Endothelial cell of umbilical vein (primary cell): ENCODE measurements at regions of chr1 and their contacts with region 1.

Region 1: DNA sequence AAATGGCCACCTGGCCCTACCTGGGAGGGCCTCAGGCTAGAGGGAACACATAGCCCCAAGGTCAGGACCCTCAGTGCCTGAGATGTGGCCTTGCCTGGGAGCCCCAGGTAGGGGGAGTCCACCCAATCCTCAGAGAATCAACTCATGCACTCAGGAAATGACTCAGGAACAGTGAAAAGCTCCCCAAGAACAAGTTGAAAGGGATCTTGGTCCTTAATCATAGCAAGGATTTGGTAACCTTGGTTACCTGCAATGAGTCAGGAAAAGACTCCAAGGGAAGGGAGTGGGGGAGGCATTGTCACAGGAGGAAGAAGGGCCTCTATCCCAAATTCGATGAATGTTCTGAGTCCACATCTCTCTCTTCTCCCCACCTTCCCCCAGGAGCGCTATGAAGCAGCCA is 17.0 kb downstream of the MAP7D1 start:
- DNase-seq: peak; percentile 49
- H3K4me3 ChIP-seq: no peak overlapping the region
- H3K27ac ChIP-seq: peak overlapping the region; percentile 56
- H3K4me1 ChIP-seq: peaks cover 19% of the 10 kb centered on the region
- H3K27me3 ChIP-seq: no peaks in the 10 kb centered on the region
- CTCF ChIP-seq: no peak
- POLR2A ChIP-seq: no peak

Region 2: DNA sequence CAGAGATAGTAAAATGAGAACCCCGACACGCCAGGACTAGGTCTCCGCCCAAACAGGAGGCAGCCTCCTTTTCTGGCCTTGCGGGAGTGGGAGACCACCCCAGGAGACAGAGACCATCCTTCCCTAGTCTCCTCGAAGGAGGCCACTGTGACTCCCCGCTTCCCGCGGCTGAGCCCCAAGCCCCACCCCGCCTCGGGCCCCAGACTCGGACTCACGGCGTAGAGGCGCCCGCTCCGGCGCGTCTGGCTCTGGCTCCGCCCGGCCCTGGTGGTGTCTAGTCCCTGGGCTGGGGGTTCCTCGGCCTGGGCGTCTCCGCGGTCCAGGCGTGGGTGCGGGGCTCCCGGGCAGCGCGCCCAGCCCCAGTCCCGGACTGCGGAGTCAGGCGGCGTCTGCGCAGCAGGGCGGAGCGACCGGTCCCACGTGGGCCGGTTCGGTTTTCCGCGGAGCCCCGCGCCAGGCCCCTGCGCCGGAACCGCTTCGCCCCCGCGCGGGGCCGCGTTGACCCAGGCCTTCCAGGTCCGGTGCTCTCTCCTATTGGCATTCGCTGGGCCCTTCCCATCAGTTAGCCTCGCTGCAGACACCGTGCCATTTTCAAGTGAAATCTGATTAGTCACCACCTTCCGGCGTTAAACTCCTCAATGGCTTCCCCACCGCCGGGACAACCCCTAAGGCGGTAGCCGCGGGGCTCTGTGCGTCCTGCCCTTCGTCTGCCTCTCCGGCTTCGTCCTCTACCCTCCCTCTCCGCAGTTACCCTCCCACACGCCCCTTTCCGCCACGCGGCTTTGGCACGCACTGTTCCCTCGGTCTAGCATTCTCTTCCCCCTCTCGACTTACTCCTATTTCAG is 454.3 kb before region 1 on chr1 and contains the start of gene C1orf216:
- CTCF ChIA-PET with region 1: no interaction called
- POLR2A ChIA-PET with region 1: no interaction called
- dilution Hi-C with region 1: no loop called
- intact Hi-C with region 1: no loop called
- DNase-seq: peak; percentile 77
- H3K4me3 ChIP-seq: peak within 1 kb of the TSS; percentile 65 to 84 (median 77)
- H3K27ac ChIP-seq: peak within 1 kb of the TSS; percentile 42
- H3K4me1 ChIP-seq: peaks cover 13% of the 10 kb centered on the region
- H3K27me3 ChIP-seq: no peaks in the 10 kb centered on the region
- CTCF ChIP-seq: no peak
- POLR2A ChIP-seq: peak; percentile 86
- total RNA-seq, gene C1orf216: 15.3 and 18.5 TPM in 2 replicates

Region 3: DNA sequence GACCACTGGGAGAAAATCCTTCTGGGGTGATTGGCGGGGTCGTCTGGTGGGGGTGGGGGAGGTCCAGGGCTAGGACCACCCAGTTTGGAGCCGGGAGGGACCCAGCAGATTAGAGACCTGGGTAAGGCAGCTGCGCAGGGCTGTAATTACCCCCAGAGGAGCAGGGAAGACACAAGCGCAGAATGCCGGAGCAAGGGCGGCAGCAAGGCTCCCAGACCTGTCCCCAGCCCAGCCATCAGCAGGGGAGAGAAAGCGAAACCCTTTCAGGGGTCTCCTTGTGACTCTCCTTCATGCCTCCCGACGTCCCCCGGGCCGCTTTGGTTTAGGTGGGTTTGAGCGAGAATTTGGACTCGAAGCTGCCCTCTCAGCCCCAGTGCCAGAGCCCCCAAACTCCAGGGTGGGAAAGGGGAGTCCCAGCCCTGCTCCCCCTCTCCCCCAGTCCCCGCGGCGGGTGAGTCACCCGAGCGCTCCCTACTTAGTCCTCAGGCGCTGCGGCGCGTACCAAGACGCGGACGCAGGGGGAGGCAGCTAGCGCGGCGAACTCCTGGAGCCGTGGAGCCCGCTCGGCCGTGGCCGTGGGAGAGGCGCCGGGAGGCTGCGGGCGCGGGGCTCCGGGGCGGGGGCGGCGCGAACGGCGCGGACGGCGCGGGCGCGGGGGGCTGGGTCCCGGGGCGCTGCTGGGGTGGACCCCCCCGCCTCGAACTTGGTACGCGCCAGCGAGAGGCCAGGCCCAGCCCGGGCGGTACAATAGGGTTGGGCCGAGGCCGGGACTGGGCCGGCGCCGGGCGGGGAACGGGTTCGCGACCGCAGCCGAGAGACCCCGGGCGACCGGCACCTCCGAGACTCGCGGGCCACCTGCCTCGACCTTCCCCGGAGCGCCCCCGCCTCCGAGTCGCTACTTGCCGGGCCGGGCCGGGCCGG is 17.3 kb before region 1 on chr1 and contains the start of gene MAP7D1:
- CTCF ChIA-PET with region 1: interaction called, 23 read pairs
- POLR2A ChIA-PET with region 1: interaction called, 10 read pairs
- dilution Hi-C with region 1: no loop called
- intact Hi-C with region 1: loop called (anchors 2 kb)
- DNase-seq: peak; percentile 76
- H3K4me3 ChIP-seq: peak within 1 kb of the TSS; percentile 48 to 88 (median 80)
- H3K27ac ChIP-seq: peak within 1 kb of the TSS; percentile 93
- H3K4me1 ChIP-seq: peaks cover 50% of the 10 kb centered on the region
- H3K27me3 ChIP-seq: no peaks in the 10 kb centered on the region
- CTCF ChIP-seq: no peak
- POLR2A ChIP-seq: peak; percentile 88
- total RNA-seq, gene MAP7D1: 193 and 199 TPM in 2 replicates

Region 4: GRCh38 chr1:36160949-36161485 is 12.0 kb before region 1 on chr1:
- CTCF ChIA-PET with region 1: interaction called, 15 read pairs
- POLR2A ChIA-PET with region 1: interaction called, 10 read pairs
- dilution Hi-C with region 1: no loop called
- intact Hi-C with region 1: loop called (anchors 1 kb)
- DNase-seq: peak; percentile 83
- H3K4me3 ChIP-seq: peak overlapping the region; percentile 26 to 66 (median 36)
- H3K27ac ChIP-seq: peak overlapping the region; percentile 97
- H3K4me1 ChIP-seq: peaks cover 51% of the 10 kb centered on the region
- H3K27me3 ChIP-seq: no peaks in the 10 kb centered on the region
- CTCF ChIP-seq: peak; percentile 29 to 36
- POLR2A ChIP-seq: peak; percentile 86

Region 5: GRCh38 chr1:36203554-36204346 is 30.8 kb after region 1 on chr1:
- CTCF ChIA-PET with region 1: no interaction called
- POLR2A ChIA-PET with region 1: no interaction called
- dilution Hi-C with region 1: no loop called
- intact Hi-C with region 1: no loop called
- DNase-seq: no peak
- H3K4me3 ChIP-seq: no peak overlapping the region
- H3K27ac ChIP-seq: no peak overlapping the region
- H3K4me1 ChIP-seq: no peaks in the 10 kb centered on the region
- H3K27me3 ChIP-seq: no peaks in the 10 kb centered on the region
- CTCF ChIP-seq: no peak
- POLR2A ChIP-seq: no peak

Region 6: GRCh38 chr1:36223993-36224536 is 51.1 kb after region 1 on chr1 and contains the start of gene THRAP3:
- CTCF ChIA-PET with region 1: no interaction called
- POLR2A ChIA-PET with region 1: no interaction called
- dilution Hi-C with region 1: no loop called
- intact Hi-C with region 1: no loop called
- DNase-seq: peak; percentile 100
- H3K4me3 ChIP-seq: peak within 1 kb of the TSS; percentile 74 to 99 (median 78)
- H3K27ac ChIP-seq: peak within 1 kb of the TSS; percentile 89
- H3K4me1 ChIP-seq: peaks cover 17% of the 10 kb centered on the region
- H3K27me3 ChIP-seq: no peaks in the 10 kb centered on the region
- CTCF ChIP-seq: no peak
- POLR2A ChIP-seq: peak; percentile 93
- total RNA-seq, gene THRAP3: 130 and 144 TPM in 2 replicates